BJ (cell line): ENCODE measurements at regions of chr9 and their contacts with region 1.

Region 1: GRCh38 chr9:113591001-113591898 is 127.7 kb downstream of the RGS3 start:
- DNase-seq: no peak
- H3K4me3 ChIP-seq: no peak overlapping the region
- H3K27me3 ChIP-seq: no peaks in the 10 kb centered on the region
- CTCF ChIP-seq: peak; percentile 91

Region 2: DNA sequence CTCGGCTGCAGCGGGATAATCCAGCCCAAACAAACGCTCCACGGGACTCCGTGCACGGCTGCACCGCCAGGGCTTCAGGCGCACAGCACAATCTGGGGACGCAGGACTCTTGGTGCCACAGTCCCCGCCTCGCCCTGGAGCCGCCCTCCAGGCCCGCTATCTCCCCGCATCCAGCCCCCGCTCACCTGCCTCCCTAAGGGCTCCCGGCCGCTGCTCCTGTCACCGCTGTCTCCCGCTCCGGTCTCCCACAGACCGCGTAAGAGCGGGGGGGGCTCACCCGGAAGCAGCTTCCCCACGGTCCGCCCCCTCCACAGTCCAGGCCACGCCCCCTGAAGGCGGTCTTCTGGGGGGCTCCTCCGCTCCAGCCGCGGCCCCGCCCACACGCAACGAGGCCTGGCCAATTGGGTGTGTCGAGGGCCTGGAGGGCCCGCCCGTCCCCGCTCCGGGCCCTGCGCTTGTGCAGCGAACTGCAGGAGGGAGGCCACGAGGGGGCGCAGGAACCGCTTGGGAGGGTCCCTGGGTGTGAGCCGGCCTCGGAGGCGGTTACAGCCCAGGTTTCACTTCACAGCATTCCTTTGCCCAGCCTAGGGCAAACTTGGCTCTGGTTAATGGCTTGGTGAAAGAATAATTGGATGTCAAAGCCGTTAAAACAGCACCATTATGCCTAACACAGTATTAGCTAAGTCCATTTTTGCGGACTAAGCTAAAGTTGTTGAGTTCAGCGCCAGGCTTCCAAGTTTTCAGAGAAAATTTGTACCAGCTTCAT is 190.0 kb before region 1 on chr9 and contains the start of gene ALAD:
- CTCF ChIA-PET with region 1: interaction called, 17 read pairs
- POLR2A ChIA-PET with region 1: no interaction called
- DNase-seq: peak; percentile 87
- H3K4me3 ChIP-seq: peak within 1 kb of the TSS; percentile 76
- H3K27me3 ChIP-seq: no peaks in the 10 kb centered on the region
- CTCF ChIP-seq: peak; percentile 95
- polyA plus RNA-seq, gene ALAD: 9.2 and 9.5 TPM in 2 replicates

Region 3: DNA sequence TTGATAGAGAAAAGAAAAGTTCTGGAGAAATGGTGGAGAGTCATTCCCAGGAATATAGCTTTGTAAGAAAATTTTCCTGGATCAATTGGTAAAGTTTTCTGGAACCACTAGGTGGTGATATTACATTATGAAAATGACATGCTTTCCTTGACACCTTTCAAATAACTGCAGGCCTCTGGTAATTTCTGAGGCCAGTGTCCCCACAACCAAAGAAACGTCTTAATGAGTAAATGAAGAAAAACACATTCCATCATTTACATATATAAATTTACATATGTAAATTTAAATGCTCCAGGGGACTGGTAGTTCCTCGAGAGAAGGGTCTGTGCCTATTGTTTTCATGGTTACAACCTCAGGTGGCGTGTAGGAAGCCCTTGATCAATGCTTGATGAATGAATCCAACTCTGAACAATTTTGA is 144.9 kb before region 1 on chr9:
- CTCF ChIA-PET with region 1: interaction called, 288 read pairs
- POLR2A ChIA-PET with region 1: no interaction called
- DNase-seq: no peak
- H3K4me3 ChIP-seq: no peak overlapping the region
- H3K27me3 ChIP-seq: no peaks in the 10 kb centered on the region
- CTCF ChIP-seq: peak; percentile 49

Region 4: DNA sequence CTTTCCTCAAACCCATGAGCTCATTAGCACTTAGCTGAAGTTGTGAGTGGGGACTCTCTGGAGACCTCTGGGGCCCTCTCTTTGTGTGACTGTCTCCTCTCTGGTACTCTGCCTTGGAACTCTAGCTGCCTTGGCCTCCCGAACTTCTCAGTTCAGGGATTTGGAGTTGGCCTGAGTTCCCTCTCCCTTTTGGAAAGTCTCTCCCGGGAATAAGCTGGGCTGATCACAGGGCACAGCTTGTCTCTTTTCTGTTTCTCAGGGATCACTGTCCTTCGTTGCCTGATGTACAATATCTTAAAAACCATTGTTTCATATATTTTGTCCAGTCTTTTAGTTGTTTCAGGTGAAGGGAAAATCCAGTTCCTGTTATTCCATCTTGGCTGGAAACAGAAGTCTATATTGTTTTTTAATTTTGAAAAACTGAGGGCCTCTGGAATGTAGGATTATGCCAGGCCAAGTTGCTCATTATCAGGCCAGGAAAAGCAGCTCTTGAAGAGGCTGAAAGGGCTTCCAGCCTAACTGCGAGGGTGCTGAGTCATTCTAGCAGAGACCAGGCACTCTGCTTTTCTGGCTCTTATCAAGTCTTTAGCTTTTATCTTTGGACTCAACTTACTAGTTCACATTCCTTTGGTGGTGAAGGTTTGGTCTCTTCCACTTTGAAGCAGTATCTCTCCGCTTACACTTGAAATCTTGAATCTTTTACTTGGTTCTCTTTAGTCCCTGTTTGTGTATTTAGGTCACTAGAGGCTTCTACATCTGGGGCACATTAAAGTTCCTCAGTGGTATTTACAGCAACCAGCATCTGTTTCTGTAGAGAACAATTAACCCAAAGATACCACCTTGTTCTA is 136.1 kb before region 1 on chr9:
- CTCF ChIA-PET with region 1: interaction called, 288 read pairs
- POLR2A ChIA-PET with region 1: interaction called, 5 read pairs
- DNase-seq: peak; percentile 59
- H3K4me3 ChIP-seq: no peak overlapping the region
- H3K27me3 ChIP-seq: no peaks in the 10 kb centered on the region
- CTCF ChIP-seq: no peak

Region 5: DNA sequence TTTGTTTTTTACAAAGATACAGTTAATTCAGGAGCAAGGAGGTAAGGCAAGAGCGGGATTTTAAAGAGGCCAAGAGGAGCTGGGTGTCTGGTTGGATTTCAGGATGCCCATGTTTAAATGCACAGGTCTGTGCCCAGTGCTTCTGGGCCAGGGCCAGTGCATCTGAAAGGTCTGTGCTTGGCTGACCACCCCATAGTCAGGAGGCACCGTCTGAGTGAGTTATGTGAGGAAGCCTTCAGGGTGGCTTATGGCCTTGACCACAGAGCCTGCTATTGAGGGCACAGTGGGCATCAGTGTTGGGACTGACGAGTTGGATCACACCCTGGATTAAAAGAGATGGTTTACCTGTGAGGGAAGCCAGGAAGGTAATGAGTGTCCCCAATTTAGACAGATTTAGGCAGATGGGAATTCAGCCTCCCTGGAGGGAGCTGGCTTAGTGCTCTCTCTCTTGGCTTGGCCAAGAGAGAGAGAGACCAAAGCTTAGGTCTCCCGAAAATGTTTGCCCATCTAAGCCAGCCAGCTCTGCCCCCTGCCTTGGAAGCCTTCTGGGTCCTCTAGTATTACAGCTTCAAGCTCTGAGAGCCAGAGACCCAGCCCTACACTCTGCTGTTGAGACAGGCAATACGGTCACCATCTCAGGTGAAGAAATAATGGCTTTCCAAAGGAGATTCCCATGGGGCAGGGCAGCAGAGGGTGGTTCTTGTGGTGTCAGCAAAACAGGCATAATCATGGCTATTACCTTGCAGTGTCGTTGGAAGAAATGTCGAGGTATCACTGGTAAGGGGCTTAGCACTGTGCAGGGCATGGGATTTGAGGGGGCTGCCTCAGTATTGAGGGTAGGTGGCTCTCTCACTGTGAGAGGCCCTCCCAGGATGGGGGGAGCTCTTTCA is 59.1 kb before region 1 on chr9:
- CTCF ChIA-PET with region 1: no interaction called
- POLR2A ChIA-PET with region 1: no interaction called
- DNase-seq: no peak
- H3K4me3 ChIP-seq: no peak overlapping the region
- H3K27me3 ChIP-seq: no peaks in the 10 kb centered on the region; the same call in 1 of the 2 replicates
- CTCF ChIP-seq: no peak

Region 6: GRCh38 chr9:113578882-113579282 is 12.4 kb before region 1 on chr9:
- CTCF ChIA-PET with region 1: interaction called, 26 read pairs
- POLR2A ChIA-PET with region 1: no interaction called
- DNase-seq: peak; percentile 84
- H3K4me3 ChIP-seq: no peak overlapping the region
- H3K27me3 ChIP-seq: no peaks in the 10 kb centered on the region
- CTCF ChIP-seq: no peak

Region 7: DNA sequence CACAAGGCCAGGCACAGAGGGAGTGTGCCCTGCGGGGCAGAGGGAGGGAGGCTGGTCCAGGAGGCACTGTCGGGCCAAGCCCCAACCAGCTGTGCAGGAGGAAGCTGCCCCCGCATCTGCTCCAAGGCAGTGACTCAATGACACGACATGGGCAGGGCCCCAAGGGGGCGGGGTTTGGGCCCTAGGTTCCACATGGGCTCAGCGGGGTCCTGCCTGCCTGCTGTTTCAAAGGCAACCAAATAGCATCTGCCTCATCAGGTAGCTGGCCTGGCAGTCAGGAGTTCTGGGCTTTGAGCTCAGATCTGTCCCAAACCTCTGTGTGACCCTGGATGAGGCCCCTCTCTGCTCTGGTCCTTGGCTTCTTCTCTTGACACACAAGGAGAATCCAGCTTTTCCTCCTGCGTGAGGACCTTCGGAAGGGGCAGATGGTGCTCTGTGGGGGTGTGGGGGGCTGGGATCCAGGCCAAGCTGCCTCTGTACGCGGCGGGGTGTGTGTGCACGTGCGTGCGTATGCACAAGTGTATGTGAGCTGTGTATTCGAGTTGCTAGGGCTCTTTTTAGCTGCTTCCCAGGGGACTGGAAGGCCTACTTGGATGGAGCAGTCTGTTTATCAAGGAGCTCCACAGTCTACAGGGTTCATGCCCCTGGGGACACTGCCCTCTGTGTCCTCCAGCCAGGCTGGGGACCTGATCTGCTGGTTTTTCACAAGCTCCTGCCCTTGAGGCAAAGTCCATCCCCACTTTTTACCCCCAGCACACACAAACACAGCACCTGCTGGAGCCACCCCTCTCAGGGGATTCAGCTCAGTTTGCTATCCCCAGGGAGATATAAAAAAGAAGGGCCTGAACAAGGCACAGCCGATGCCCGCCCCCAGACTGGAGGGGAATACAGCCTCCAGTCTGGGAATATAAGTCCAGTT is 11.1 kb after region 1 on chr9:
- CTCF ChIA-PET with region 1: interaction called, 10 read pairs
- POLR2A ChIA-PET with region 1: no interaction called
- DNase-seq: no peak
- H3K4me3 ChIP-seq: no peak overlapping the region
- H3K27me3 ChIP-seq: no peaks in the 10 kb centered on the region
- CTCF ChIP-seq: no peak

Region 8: DNA sequence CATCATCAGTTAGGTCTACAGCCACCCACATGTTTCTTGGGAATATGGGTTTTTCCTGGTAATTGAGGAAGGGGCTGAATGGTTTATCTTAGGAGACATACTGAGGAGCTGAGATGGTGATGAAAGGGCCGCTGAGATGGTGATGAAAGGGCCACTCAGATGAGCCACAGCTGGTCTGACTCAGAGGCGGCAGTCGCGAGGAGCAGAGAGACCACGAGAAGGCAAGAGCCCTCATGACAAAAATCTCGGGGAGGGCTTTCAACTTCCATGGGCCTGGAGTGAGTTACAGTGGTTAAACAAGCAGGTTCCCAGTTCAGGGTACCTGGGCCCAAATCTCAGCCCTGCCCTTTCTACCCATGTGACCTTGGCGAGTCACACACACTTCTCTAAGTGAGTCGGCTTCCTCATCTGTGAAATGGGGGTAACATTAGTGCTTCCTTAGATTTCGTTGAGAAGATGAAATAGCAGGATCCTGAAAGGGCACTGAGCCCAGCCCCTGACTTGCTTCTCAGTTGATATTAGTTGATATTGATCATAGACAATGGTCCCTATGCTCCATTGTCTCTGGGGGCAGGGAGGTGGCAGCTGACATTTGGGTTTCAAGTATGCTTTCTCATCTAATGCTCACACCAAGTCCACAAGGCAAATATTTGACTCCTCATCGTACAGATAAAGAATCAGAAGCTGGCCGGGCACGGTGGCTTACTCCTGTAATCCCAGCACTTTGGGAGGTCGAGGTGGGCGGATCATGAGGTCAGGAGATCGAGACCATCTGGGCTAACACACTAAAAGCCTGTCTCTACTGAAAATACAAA is 41.7 kb after region 1 on chr9:
- CTCF ChIA-PET with region 1: interaction called, 4 read pairs
- POLR2A ChIA-PET with region 1: interaction called, 21 read pairs
- DNase-seq: no peak
- H3K4me3 ChIP-seq: no peak overlapping the region
- H3K27me3 ChIP-seq: peaks cover 13% of the 10 kb centered on the region
- CTCF ChIP-seq: no peak

Region 9: DNA sequence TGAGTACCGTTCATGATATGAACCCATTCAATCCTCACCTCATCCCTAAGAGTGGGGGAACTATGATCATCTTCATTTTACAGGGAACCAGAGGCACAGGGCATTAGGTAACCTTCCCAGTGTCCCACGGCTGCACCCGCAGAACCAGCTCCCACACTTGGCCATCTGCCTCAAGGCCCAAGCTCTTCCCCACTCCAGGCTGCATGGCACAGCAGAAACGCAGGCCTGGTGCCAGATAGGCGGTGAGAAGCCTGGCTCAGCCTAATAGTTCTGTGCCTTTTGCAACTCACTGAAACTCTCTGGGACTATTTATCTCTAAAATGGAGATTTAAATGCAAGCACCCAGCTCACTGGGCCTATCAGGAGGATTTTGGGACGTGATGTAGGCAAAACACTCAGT is 194.1 kb after region 1 on chr9:
- CTCF ChIA-PET with region 1: no interaction called
- POLR2A ChIA-PET with region 1: no interaction called
- DNase-seq: no peak
- H3K4me3 ChIP-seq: no peak overlapping the region
- H3K27me3 ChIP-seq: peaks cover 11% of the 10 kb centered on the region
- CTCF ChIP-seq: no peak